Mammary epithelial cell (primary cell): ENCODE measurements at regions of chr9 and their contacts with region 1.

Region 1: DNA sequence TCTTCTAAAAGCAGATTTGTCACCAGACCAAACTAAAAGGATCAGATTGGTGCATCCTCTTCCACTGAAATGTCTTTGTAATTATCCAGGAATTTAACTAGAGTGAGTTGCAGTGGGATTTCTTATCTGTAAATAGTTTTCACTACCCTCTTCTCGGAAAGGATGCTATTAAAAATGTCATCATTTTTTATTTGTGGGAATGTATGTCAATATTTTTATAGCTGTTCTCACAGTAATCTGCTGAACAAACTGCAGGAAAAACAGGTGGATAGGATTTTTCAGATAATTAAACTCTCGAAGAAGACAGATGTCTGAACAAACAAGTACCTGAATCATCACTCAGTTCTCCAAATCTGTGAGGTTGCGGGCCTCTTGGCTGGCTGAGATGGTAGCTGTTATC is 62.7 kb downstream of the RAB14 start:
- DNase-seq: no peak
- H3K4me3 ChIP-seq: no peak overlapping the region
- H3K27ac ChIP-seq: peak overlapping the region; percentile 57
- H3K4me1 ChIP-seq: peaks cover 24% of the 10 kb centered on the region
- H3K27me3 ChIP-seq: no peaks in the 10 kb centered on the region
- CTCF ChIP-seq: no peak

Region 2: DNA sequence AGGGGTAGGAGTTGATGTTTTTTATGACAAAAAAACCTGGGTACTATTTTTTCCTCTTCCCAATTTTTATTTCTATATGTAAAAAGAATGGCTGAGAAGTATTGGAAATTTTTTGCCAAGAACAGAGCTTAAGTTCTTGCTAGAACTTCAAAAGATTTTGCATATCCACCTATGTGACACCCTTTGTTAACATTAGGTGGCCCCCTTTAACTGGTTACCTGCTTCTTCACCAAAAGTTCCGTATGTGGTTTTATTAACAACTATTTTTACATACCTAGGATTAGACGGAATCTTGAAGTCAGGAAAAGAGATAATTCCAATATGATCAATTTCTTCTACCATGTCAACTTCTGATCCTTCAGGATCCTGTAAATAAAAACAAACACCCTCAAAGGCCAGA is 104.4 kb before region 1 on chr9:
- CTCF ChIA-PET with region 1: no interaction called
- dilution Hi-C with region 1: no loop called
- in situ Hi-C with region 1: no loop called
- intact Hi-C with region 1: no loop called
- DNase-seq: no peak
- H3K4me3 ChIP-seq: no peak overlapping the region
- H3K27ac ChIP-seq: no peak overlapping the region
- H3K4me1 ChIP-seq: peaks cover 3% of the 10 kb centered on the region
- H3K27me3 ChIP-seq: no peaks in the 10 kb centered on the region
- CTCF ChIP-seq: no peak

Region 3: DNA sequence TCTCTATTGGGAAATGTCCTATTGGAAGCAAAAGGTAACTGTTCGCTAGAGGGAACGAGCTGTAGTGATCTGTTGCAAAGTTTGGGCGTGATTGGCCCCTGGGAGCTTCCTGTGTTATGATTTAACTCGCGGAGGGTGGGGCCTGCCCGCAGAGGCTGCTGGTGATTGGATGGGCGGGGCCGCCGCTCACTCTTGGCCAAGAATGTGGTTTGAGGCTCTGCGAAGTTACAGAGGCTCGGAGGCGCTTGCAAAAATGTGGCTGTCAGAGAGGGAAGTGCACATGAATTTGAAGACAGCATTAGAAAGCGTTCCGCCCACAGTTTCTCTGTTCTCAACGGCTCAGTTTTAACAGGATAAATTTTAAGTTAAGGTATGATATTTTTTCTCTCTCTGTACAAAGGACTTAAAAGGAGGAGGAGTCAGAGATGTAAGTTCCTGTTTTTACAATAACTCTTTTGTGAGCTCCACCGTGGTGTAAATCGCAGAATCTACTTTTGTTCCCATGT is 17.3 kb before region 1 on chr9:
- CTCF ChIA-PET with region 1: no interaction called
- dilution Hi-C with region 1: no loop called
- in situ Hi-C with region 1: no loop called
- intact Hi-C with region 1: loop called (anchors 2 kb)
- DNase-seq: peak; percentile 96
- H3K4me3 ChIP-seq: peak overlapping the region; percentile 49 to 88 (median 58)
- H3K27ac ChIP-seq: peak overlapping the region; percentile 71
- H3K4me1 ChIP-seq: peaks cover 11% of the 10 kb centered on the region
- H3K27me3 ChIP-seq: no peaks in the 10 kb centered on the region
- CTCF ChIP-seq: peak in 1 of 2 donors; percentile 37

Region 4: GRCh38 chr9:121169094-121169601 is 30.2 kb after region 1 on chr9:
- CTCF ChIA-PET with region 1: no interaction called
- dilution Hi-C with region 1: no loop called
- in situ Hi-C with region 1: no loop called
- intact Hi-C with region 1: loop called (anchors 2 kb)
- DNase-seq: no peak
- H3K4me3 ChIP-seq: no peak overlapping the region
- H3K27ac ChIP-seq: no peak overlapping the region
- H3K4me1 ChIP-seq: no peaks in the 10 kb centered on the region
- H3K27me3 ChIP-seq: no peaks in the 10 kb centered on the region
- CTCF ChIP-seq: peak; percentile 51

Region 5: GRCh38 chr9:122099271-122099869 is 960.4 kb after region 1 on chr9:
- CTCF ChIA-PET with region 1: no interaction called
- dilution Hi-C with region 1: no loop called
- in situ Hi-C with region 1: no loop called
- intact Hi-C with region 1: no loop called
- DNase-seq: peak; percentile 54
- H3K4me3 ChIP-seq: peak overlapping the region in 2 of 3 experiments; percentile 1 to 17
- H3K27ac ChIP-seq: no peak overlapping the region
- H3K4me1 ChIP-seq: no peaks in the 10 kb centered on the region
- H3K27me3 ChIP-seq: no peaks in the 10 kb centered on the region
- CTCF ChIP-seq: peak; percentile 76 to 81